ENCODE measurements at regions of chr12 and their contacts with region 1.

Region 1: GRCh38 chr12:31274520-31275300 is 51.2 kb downstream of the SINHCAF start:
- DNase-seq: no peak
- H3K4me3 ChIP-seq: no peak overlapping the region
- H3K27ac ChIP-seq: no peak overlapping the region
- H3K4me1 ChIP-seq: no peaks in the 10 kb centered on the region
- H3K27me3 ChIP-seq: no peaks in the 10 kb centered on the region
- CTCF ChIP-seq: no peak

Region 2: GRCh38 chr12:30908722-30909348 is 365.9 kb before region 1 on chr12:
- CTCF ChIA-PET with region 1: no interaction called
- POLR2A ChIA-PET with region 1: no interaction called
- intact Hi-C with region 1: no loop called
- DNase-seq: no peak
- H3K4me3 ChIP-seq: no peak overlapping the region
- H3K27ac ChIP-seq: no peak overlapping the region
- H3K4me1 ChIP-seq: no peaks in the 10 kb centered on the region
- H3K27me3 ChIP-seq: no peaks in the 10 kb centered on the region
- CTCF ChIP-seq: no peak

Region 3: GRCh38 chr12:31245822-31246469 is 28.8 kb before region 1 on chr12:
- CTCF ChIA-PET with region 1: interaction called, 20 read pairs
- POLR2A ChIA-PET with region 1: no interaction called
- intact Hi-C with region 1: no loop called
- DNase-seq: peak in 1 of 2 experiments; percentile 33
- H3K4me3 ChIP-seq: no peak overlapping the region
- H3K27ac ChIP-seq: no peak overlapping the region
- H3K4me1 ChIP-seq: no peaks in the 10 kb centered on the region
- H3K27me3 ChIP-seq: no peaks in the 10 kb centered on the region
- CTCF ChIP-seq: no peak

Region 4: GRCh38 chr12:31259136-31259886 is 15.4 kb before region 1 on chr12:
- CTCF ChIA-PET with region 1: interaction called, 15 read pairs
- POLR2A ChIA-PET with region 1: interaction called, 6 read pairs
- intact Hi-C with region 1: no loop called
- DNase-seq: no peak
- H3K4me3 ChIP-seq: no peak overlapping the region
- H3K27ac ChIP-seq: no peak overlapping the region
- H3K4me1 ChIP-seq: no peaks in the 10 kb centered on the region
- H3K27me3 ChIP-seq: no peaks in the 10 kb centered on the region
- CTCF ChIP-seq: no peak

Region 5: GRCh38 chr12:31387466-31387865 is 112.8 kb after region 1 on chr12:
- CTCF ChIA-PET with region 1: no interaction called
- POLR2A ChIA-PET with region 1: no interaction called
- intact Hi-C with region 1: loop called (anchors 5 kb)
- DNase-seq: no peak
- H3K4me3 ChIP-seq: no peak overlapping the region
- H3K27ac ChIP-seq: no peak overlapping the region
- H3K4me1 ChIP-seq: no peaks in the 10 kb centered on the region
- H3K27me3 ChIP-seq: no peaks in the 10 kb centered on the region
- CTCF ChIP-seq: no peak

Region 6: GRCh38 chr12:31631784-31632183 is 357.1 kb after region 1 on chr12:
- CTCF ChIA-PET with region 1: interaction called, 3 read pairs
- POLR2A ChIA-PET with region 1: no interaction called
- intact Hi-C with region 1: loop called (anchors 2 kb)
- DNase-seq: no peak
- H3K4me3 ChIP-seq: no peak overlapping the region
- H3K27ac ChIP-seq: no peak overlapping the region
- H3K4me1 ChIP-seq: no peaks in the 10 kb centered on the region
- H3K27me3 ChIP-seq: no peaks in the 10 kb centered on the region
- CTCF ChIP-seq: no peak

Measured in PC-9 (cell line).